Caco-2 (cell line): ENCODE measurements at regions of chr20 and their contacts with region 1.

Region 1: GRCh38 chr20:38165089-38165989 is at the start of gene TGM2:
- DNase-seq: peak; percentile 94 to 98
- H3K4me3 ChIP-seq: peak within 1 kb of the TSS; percentile 44
- H3K4me3 Mint-ChIP-seq: peak within 1 kb of the TSS; percentile 67
- H3K27ac Mint-ChIP-seq: peak within 1 kb of the TSS; percentile 6
- H3K4me1 ChIP-seq: peaks cover 38% of the 10 kb centered on the region
- H3K4me1 Mint-ChIP-seq: peaks cover 21% of the 10 kb centered on the region
- H3K27me3 ChIP-seq: no peaks in the 10 kb centered on the region
- H3K27me3 Mint-ChIP-seq: no peaks in the 10 kb centered on the region
- CTCF ChIP-seq: peak; percentile 97 to 98
- total RNA-seq, gene TGM2: 138 and 162 TPM in 2 replicates

Region 2: DNA sequence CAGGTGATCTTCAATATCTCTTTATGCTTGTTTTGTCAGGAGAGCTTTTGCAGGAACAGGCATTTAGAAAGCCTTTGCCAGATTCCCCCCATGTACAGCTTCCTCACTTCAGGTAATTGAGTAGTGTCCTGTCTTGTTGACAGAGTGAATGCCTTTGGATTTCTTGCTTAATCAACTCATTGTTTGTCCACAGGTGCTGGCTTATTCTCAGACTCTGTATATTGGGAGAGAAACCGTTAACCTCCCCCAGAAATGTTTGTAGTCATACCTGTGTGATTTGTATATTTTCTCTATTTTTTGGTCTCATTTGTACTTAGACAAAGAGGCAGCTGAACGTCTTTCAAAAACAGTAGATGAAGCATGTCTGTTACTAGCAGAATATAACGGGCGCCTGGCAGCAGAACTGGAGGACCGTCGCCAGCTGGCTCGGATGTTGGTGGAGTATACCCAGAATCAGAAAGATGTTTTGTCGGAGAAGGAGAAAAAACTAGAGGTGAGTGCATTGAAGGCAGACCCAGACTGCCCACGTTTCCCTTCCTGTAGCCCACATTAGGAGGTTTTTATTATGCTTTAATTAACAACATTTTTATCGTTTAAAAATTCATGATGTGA is 99.5 kb before region 1 on chr20:
- CTCF ChIA-PET with region 1: no interaction called
- POLR2A ChIA-PET with region 1: no interaction called
- intact Hi-C with region 1: loop called (anchors 2 kb)
- DNase-seq: peak in 1 of 2 experiments; percentile 25
- H3K4me3 ChIP-seq: no peak overlapping the region
- H3K4me3 Mint-ChIP-seq: no peak overlapping the region
- H3K27ac Mint-ChIP-seq: no peak overlapping the region
- H3K4me1 ChIP-seq: no peaks in the 10 kb centered on the region
- H3K4me1 Mint-ChIP-seq: no peaks in the 10 kb centered on the region
- H3K27me3 ChIP-seq: no peaks in the 10 kb centered on the region
- H3K27me3 Mint-ChIP-seq: no peaks in the 10 kb centered on the region
- CTCF ChIP-seq: no peak

Region 3: DNA sequence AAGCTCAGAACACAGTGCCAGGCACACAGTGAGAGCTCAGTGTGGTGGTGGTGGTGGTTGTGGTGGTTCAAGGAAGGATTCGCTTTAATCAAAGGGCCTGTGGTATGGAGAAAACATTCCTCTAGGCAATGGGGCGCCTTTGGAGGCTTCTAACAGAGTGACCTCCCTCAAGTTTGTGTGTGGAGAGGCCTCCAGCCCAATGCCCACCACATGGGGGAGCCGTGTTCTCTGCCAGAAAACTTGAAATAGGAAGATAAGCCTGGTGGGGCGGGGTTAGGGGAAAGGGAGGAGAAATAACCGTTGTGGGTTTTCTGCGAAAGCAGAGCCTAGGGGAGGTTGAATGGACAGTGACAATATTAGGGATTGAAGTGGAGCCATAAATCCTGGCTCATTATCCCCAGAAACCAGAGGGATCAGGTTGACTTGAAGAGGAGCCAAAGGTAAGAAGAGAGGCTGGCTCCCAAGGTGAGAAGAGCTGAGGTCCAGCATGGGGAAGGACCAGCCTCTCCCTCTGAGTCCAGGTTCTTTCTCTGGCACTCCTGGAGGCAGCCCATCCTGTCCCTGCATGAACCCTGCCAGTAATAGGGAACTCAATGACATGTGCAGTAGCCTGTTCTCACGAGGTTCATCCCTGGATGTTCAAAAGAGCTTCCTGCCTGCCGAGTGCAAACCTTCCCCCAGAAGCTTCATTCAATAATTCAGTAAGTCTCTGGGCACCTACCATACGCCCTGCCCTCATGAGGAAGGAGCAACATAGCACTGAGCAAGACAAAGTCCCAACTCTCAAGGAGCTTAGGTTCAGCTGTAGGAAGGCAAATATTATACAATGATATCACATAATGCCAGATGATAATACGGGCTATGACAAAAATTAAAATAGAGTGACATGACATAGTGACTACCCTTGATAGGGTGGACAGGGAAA is 51.7 kb before region 1 on chr20:
- CTCF ChIA-PET with region 1: interaction called, 16 read pairs
- POLR2A ChIA-PET with region 1: no interaction called
- intact Hi-C with region 1: loop called (anchors 1 kb)
- DNase-seq: peak; percentile 93
- H3K4me3 ChIP-seq: no peak overlapping the region
- H3K4me3 Mint-ChIP-seq: peak overlapping the region; percentile 8
- H3K27ac Mint-ChIP-seq: peak overlapping the region; percentile 34
- H3K4me1 ChIP-seq: peaks cover 76% of the 10 kb centered on the region
- H3K4me1 Mint-ChIP-seq: peaks cover 77% of the 10 kb centered on the region
- H3K27me3 ChIP-seq: no peaks in the 10 kb centered on the region
- H3K27me3 Mint-ChIP-seq: no peaks in the 10 kb centered on the region
- CTCF ChIP-seq: peak; percentile 80 to 93

Region 4: GRCh38 chr20:38123021-38123587 is 42.2 kb before region 1 on chr20:
- CTCF ChIA-PET with region 1: interaction called, 3 read pairs
- POLR2A ChIA-PET with region 1: no interaction called
- intact Hi-C with region 1: loop called (anchors 2 kb)
- DNase-seq: peak; percentile 96 to 98
- H3K4me3 ChIP-seq: no peak overlapping the region
- H3K4me3 Mint-ChIP-seq: peak overlapping the region; percentile 50
- H3K27ac Mint-ChIP-seq: peak overlapping the region; percentile 99
- H3K4me1 ChIP-seq: peaks cover 34% of the 10 kb centered on the region
- H3K4me1 Mint-ChIP-seq: peaks cover 42% of the 10 kb centered on the region
- H3K27me3 ChIP-seq: no peaks in the 10 kb centered on the region
- H3K27me3 Mint-ChIP-seq: no peaks in the 10 kb centered on the region
- CTCF ChIP-seq: no peak

Region 5: GRCh38 chr20:38143646-38144554 is 21.4 kb before region 1 on chr20:
- CTCF ChIA-PET with region 1: interaction called, 11 read pairs
- POLR2A ChIA-PET with region 1: interaction called, 7 read pairs
- intact Hi-C with region 1: loop called (anchors 1 kb)
- DNase-seq: peak; percentile 89 to 97
- H3K4me3 ChIP-seq: no peak overlapping the region
- H3K4me3 Mint-ChIP-seq: peak overlapping the region; percentile 56
- H3K27ac Mint-ChIP-seq: peak overlapping the region; percentile 96
- H3K4me1 ChIP-seq: peaks cover 66% of the 10 kb centered on the region
- H3K4me1 Mint-ChIP-seq: peaks cover 48% of the 10 kb centered on the region
- H3K27me3 ChIP-seq: no peaks in the 10 kb centered on the region
- H3K27me3 Mint-ChIP-seq: no peaks in the 10 kb centered on the region
- CTCF ChIP-seq: no peak